ENCODE measurements at regions of chr16 and their contacts with region 1.

Region 1: DNA sequence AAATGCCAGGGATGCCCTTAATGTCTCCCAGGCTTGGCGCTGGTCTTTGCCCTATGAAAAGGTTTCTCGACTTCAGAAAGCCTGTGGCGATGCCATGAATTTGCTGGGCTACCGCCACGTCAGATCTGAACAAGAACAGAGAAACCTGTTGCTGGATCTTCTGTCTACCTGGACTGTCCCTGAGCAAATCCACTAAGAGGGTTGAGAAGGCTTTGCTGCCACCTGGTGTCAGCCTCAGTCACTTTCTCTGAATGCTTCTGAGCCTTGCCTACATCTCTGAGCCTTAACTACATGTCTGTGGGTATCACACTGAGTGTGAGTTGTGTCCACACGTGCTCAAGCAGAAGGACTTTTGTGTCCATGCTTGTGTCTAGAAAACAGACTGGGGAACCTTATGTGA is 11.4 kb downstream of the CHST4 start:
- DNase-seq: peak; percentile 67
- CTCF ChIP-seq: peak; percentile 79

Region 2: GRCh38 chr16:71526111-71526631 is 11.5 kb before region 1 on chr16 and contains the start of gene CHST4:
- CTCF ChIA-PET with region 1: interaction called, 19 read pairs
- POLR2A ChIA-PET with region 1: no interaction called
- DNase-seq: no peak
- CTCF ChIP-seq: no peak

Region 3: DNA sequence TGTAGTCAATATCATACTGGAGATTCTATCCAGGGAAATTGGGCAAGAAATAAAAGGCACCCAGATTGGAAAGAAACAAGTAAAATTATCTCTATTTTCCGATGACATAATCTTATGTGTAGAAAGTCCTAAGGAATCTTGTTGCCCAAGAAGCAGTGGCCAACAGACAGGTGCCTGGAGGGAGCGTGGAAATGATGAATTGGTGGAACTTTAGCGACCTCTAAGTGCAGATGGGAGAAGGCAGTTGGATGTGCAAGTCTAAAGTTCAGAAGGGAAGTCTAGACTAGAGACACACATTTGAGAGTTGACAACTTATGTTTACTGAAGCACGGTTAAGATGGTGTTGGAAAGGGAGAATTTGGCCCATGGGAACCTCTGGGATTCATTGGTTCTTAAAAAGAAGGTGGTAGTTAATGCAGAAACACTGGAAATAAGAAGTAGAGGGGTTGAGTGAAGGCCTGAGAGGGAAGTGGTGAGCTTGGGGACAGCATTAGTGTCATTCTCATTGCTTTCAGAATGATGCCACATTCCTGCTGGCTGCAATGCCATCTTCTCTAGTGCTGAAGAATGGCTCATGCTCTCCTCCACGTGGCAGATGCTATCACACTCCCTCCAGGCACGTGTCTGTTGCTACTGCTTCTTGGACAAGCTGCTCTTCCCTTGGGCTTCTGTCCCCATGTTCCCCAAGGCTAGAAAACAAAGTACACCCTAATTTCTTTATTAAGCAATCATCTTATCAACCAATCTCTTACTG is 15.2 kb after region 1 on chr16:
- CTCF ChIA-PET with region 1: interaction called, 61 read pairs
- POLR2A ChIA-PET with region 1: no interaction called
- DNase-seq: no peak
- CTCF ChIP-seq: no peak

Measured in GM10248 (cell line).